Prostate gland (tissue), 2 donors: ENCODE measurements at regions of chr9 and their contacts with region 1.

Region 1: GRCh38 chr9:94166237-94166963 is 82.1 kb downstream of the PTPDC1 start:
- DNase-seq: peak; percentile 98
- H3K4me3 ChIP-seq: peak overlapping the region; percentile 95 to 98
- H3K27ac ChIP-seq: peak overlapping the region; percentile 99 to 100
- H3K4me1 ChIP-seq: no peaks in the 10 kb centered on the region
- H3K27me3 ChIP-seq: no peaks in the 10 kb centered on the region
- CTCF ChIP-seq: peak in 2 of 4 experiments; percentile 25 to 37
- POLR2A ChIP-seq: peak; percentile 95

Region 2: GRCh38 chr9:93898502-93899426 is 267.6 kb before region 1 on chr9:
- intact Hi-C with region 1: no loop called
- DNase-seq: no peak
- H3K4me3 ChIP-seq: no peak overlapping the region
- H3K27ac ChIP-seq: no peak overlapping the region
- H3K4me1 ChIP-seq: no peaks in the 10 kb centered on the region
- H3K27me3 ChIP-seq: no peaks in the 10 kb centered on the region
- CTCF ChIP-seq: no peak
- POLR2A ChIP-seq: no peak

Region 3: DNA sequence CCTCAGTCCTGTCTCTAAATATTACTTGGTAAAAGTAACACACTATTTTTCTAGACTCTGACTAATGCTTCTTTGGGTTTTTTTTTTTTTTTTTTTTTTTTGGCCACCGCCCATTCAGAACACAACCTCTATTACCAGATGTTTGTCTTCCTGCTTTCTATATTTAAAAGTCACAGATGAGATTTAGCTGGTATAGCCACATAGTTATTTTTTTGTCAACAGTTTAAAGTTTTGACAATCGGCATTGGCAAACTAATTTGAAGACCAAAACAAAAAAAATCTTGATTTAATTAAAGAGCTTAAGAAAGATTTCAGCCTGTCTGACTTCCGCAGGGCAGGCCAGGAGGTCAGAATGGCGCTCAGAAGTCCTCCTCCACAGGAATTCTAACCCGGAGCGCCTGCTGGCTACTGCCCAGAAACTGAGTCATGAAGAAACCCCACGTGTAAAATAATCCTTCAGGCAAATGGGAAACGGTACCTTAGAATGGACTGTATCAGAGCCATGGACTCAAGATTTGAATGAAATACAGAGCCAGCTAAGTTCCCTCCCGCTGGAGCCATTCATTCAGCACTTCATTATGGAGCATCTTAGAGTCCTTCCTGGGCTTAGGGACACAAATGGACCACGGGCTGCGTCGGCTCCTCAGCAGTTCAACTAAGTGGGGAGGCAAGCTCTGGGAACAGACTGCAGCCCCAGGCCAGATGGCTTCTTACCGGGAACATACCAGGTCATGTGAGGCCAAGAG is 26.6 kb before region 1 on chr9:
- intact Hi-C with region 1: loop called (anchors 1 kb)
- DNase-seq: peak; percentile 68
- H3K4me3 ChIP-seq: no peak overlapping the region
- H3K27ac ChIP-seq: peak overlapping the region; percentile 70 to 80
- H3K4me1 ChIP-seq: peaks cover 7% of the 10 kb centered on the region
- H3K27me3 ChIP-seq: no peaks in the 10 kb centered on the region
- CTCF ChIP-seq: no peak
- POLR2A ChIP-seq: no peak